ENCODE measurements at regions of chr4 and their contacts with region 1.

Region 1: GRCh38 chr4:73139991-73140390 is 70.5 kb upstream of the COX18 start:
- DNase-seq: no peak
- ATAC-seq: no peak
- H3K4me3 ChIP-seq: no peak overlapping the region
- H3K27ac ChIP-seq: no peak overlapping the region
- H3K4me1 ChIP-seq: no peaks in the 10 kb centered on the region
- H3K27me3 ChIP-seq: no peaks in the 10 kb centered on the region
- CTCF ChIP-seq: no peak

Region 2: GRCh38 chr4:73258686-73259570 is 118.9 kb after region 1 on chr4 and contains the start of gene ANKRD17:
- intact Hi-C with region 1: loop called (anchors 10 kb)
- DNase-seq: peak; percentile 97
- ATAC-seq: peak; percentile 92
- H3K4me3 ChIP-seq: peak within 1 kb of the TSS; percentile 85
- H3K27ac ChIP-seq: peak within 1 kb of the TSS; percentile 99
- H3K4me1 ChIP-seq: peaks cover 36% of the 10 kb centered on the region
- H3K27me3 ChIP-seq: no peaks in the 10 kb centered on the region
- CTCF ChIP-seq: peak; percentile 22
- total RNA-seq, gene ANKRD17: 61.5 TPM